GM13977 (cell line): ENCODE measurements at regions of chr7 and their contacts with region 1.

Region 1: DNA sequence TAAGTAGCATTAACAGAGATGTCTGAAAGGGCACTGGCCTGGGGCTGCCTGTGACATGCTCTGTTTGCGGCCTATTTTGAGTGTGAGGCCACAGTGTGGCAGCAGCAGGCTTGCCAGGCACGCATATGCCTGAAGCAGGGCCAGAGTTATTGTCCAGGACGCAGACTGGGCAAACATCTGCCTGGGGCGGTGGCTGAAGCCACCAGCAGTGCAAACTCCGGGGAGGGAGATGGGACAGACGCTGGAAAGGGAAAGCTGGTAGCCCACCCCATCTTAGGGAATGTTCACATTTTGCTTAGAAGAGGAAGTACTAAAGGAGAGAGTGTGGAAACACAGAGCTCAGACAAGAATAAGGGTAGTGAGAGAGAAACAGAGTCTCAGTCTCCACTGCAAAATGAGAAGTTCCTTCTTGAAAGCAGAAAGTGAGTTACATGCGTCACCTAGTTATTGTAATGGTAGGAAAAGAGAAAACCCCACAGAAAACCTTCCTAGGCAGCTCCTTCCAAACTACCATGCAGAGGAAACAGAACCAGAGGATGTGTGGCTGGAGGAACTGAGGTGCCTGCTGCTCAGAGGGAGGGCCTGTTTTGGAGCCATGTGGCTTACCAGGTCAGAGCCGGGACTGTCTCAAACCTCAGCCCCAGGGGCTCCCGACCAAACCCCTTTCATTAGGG is 14.6 kb downstream of the AKR1B1 start:
- DNase-seq: no peak
- CTCF ChIP-seq: peak; percentile 10

Region 2: DNA sequence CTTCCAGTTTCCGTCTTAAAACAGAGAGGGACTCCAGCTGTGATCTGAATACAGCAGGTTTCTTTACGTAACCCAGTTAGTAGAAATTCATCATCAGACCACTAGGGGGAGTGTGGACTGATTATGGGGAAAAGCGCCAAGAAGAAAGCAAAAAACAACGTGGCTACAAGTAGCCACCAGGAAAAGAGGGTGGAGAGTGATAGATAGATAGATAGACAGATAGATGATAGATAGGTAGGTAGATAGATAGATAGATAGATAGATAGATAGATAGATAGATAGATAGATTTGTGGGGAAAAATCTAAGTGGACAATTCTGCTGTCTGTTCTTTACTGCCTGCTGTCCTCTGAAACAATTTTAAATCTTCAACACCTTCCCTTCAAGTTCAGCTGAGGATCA is 70.3 kb after region 1 on chr7:
- in situ Hi-C with region 1: loop called (anchors 5 kb)
- DNase-seq: peak; percentile 64
- CTCF ChIP-seq: peak; percentile 78

Region 3: GRCh38 chr7:134589480-134589941 is 145.2 kb after region 1 on chr7:
- in situ Hi-C with region 1: no loop called
- DNase-seq: no peak
- CTCF ChIP-seq: no peak

Region 4: GRCh38 chr7:134724606-134725005 is 280.3 kb after region 1 on chr7:
- in situ Hi-C with region 1: no loop called
- DNase-seq: peak; percentile 27
- CTCF ChIP-seq: peak; percentile 50

Region 5: GRCh38 chr7:135001390-135002165 is 557.2 kb after region 1 on chr7:
- in situ Hi-C with region 1: no loop called
- DNase-seq: no peak
- CTCF ChIP-seq: no peak